K562 (cell line): ENCODE measurements at regions of chr3 and their contacts with region 1.

Region 1: GRCh38 chr3:14780927-14781507 is 37.7 kb upstream of the FGD5 start:
- DNase-seq: peak; percentile 43 to 77 (median 60)
- ATAC-seq: peak; percentile 100
- H3K4me3 ChIP-seq: no peak overlapping the region
- H3K27ac ChIP-seq: no peak overlapping the region
- H3K4me1 ChIP-seq: no peaks in the 10 kb centered on the region
- H3K27me3 ChIP-seq: peaks cover 13 to 31% of the 10 kb centered on the region in 2 experiments
- CTCF ChIP-seq: peak; percentile 89 to 90 (median 90)
- EP300 ChIP-seq: no peak
- POLR2A ChIP-seq: no peak
- RAD21 ChIP-seq: peak; percentile 71 to 94

Region 2: DNA sequence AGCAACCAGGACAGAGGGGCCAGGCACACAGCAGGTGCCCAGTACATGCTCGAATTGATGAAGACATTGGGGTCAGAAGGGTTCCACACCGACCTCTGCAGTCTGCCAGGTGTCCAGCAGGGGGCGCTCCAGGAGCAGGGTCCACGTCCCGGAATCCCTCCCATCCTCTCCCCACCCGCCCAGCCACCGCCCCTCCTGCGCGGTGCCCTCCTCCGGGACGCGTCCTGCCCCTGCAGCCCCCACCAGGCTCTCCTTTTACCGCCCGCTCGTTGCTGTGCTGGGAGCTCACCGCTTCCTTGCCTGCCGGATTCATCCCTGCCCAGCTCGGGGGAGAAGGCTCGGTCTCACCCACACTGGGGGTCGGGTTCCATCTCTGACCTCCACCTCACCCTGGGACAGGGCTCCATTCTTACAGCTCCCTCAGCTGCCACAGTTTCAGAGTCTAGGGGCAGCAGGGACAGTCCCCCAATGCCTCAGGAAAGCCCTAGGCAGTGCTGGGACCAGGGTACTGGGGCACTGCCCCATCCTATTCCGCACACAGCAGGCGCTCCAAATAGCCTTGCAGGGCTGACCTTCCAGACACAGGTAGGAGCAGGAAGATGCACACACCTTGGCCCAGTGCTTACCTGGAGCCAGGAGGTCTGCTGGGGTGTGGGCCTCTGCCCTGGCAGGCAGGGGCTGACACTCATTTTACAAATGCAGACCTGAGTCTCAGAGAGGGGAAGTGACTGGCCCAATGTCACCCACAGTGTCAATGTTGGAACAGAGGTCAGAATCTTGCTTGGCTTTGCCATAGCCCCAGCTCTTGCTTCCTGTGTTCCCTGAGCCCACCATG is 271.8 kb before region 1 on chr3:
- CTCF ChIA-PET with region 1: no interaction called
- POLR2A ChIA-PET with region 1: no interaction called
- in situ Hi-C with region 1: no loop called
- intact Hi-C with region 1: loop called (anchors 5 kb)
- DNase-seq: peak; percentile 84 to 96 (median 94)
- ATAC-seq: peak; percentile 89
- H3K4me3 ChIP-seq: no peak overlapping the region
- H3K27ac ChIP-seq: no peak overlapping the region
- H3K4me1 ChIP-seq: peaks cover 0 to 36% of the 10 kb centered on the region in 2 experiments; a peak in 2 of 5 replicates
- H3K27me3 ChIP-seq: peaks cover 8 to 56% of the 10 kb centered on the region in 2 experiments; a peak in 4 of 5 replicates
- CTCF ChIP-seq: peak; percentile 87 to 90 (median 89)
- EP300 ChIP-seq: no peak
- POLR2A ChIP-seq: no peak
- RAD21 ChIP-seq: peak; percentile 55 to 81

Region 3: GRCh38 chr3:14633819-14634424 is 147.1 kb before region 1 on chr3:
- CTCF ChIA-PET with region 1: interaction called, 4 read pairs
- POLR2A ChIA-PET with region 1: interaction called, 3 read pairs
- in situ Hi-C with region 1: no loop called
- intact Hi-C with region 1: loop called (anchors 1 kb)
- DNase-seq: peak; percentile 74 to 83 (median 81)
- ATAC-seq: peak; percentile 99
- H3K4me3 ChIP-seq: no peak overlapping the region
- H3K27ac ChIP-seq: no peak overlapping the region
- H3K4me1 ChIP-seq: no peaks in the 10 kb centered on the region
- H3K27me3 ChIP-seq: peaks cover 20 to 54% of the 10 kb centered on the region in 2 experiments; a peak in 4 of 5 replicates
- CTCF ChIP-seq: peak; percentile 90 to 96 (median 93)
- EP300 ChIP-seq: no peak
- POLR2A ChIP-seq: no peak
- RAD21 ChIP-seq: peak; percentile 67 to 92

Region 4: DNA sequence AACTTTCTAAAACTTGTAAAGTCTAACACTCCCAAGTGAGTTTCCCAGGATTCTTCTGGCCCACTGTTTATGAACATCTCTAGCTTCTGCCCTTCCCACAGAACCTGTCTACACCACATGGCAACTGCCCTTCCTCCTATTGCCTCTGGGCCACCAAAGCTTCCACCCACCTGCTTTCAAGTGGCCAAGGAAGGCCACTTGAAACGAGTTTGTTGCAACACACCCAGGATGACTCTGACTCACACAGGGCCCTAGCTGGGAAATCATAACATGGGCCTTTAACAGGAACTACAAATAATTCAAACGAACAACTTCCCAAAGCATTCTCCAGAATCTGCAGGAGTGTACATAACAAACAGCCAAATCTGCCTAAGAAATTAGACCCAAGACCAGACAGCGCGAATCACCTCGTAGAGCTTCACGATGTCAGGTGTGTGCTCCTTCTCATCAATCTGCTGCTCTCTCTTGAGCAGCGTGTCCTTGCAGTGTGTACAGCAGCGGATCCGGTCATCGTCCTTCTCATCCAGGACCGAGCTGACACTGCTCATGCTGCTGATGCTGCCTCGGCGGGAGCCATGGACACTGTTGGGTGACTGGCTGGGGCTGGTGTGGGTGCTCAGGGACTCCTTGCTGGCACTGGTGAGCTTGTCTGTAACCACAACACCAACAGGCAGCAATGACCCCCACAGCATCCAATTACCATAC is 301.1 kb after region 1 on chr3:
- CTCF ChIA-PET with region 1: no interaction called
- POLR2A ChIA-PET with region 1: no interaction called
- in situ Hi-C with region 1: no loop called
- intact Hi-C with region 1: no loop called
- DNase-seq: no peak
- ATAC-seq: no peak
- H3K4me3 ChIP-seq: no peak overlapping the region
- H3K27ac ChIP-seq: no peak overlapping the region
- H3K4me1 ChIP-seq: no peaks in the 10 kb centered on the region
- H3K27me3 ChIP-seq: no peaks in the 10 kb centered on the region
- CTCF ChIP-seq: no peak
- EP300 ChIP-seq: no peak
- POLR2A ChIP-seq: no peak
- RAD21 ChIP-seq: no peak